ENCODE measurements at regions of chr18 and their contacts with region 1.

Region 1: DNA sequence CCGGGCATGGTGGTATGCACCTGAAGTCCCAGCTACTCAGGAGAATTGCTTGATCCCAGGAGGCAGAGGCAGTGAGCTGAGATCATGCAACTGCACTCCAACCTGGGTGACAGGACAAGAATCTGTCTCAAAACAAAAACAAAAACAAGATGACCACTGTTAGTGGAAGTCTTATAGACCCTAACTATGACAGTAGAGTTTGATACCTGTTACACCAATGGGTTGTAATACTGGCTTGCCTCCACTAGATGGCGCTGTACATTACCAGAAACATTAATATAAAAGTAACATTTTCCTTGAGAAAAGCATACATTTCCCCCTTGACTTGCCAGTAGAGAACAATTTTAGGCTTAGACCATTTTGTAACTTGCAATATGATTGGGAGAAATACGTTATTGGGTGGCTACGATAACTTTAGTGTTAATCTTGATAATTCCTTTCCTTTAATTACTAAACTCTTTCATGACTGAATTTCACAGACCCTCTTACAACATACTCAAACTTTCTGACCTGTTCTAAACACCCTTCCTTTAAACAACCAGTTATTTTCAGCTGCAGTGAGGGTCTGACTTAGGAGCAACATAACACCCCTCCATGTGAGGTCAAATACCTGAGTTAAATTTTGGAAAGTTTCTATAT is 19.5 kb downstream of the SLC25A52 start:
- DNase-seq: peak in 8 of 9 experiments; percentile 32 to 70 (median 56)
- ATAC-seq: peak; percentile 51
- H3K4me3 ChIP-seq: no peak overlapping the region
- H3K4me3 Mint-ChIP-seq: no peak overlapping the region
- H3K27ac ChIP-seq: no peak overlapping the region
- H3K27ac Mint-ChIP-seq: no peak overlapping the region
- H3K4me1 ChIP-seq: no peaks in the 10 kb centered on the region
- H3K4me1 Mint-ChIP-seq: no peaks in the 10 kb centered on the region
- H3K27me3 ChIP-seq: no peaks in the 10 kb centered on the region
- H3K27me3 Mint-ChIP-seq: no peaks in the 10 kb centered on the region
- CTCF ChIP-seq: peak; percentile 98

Region 2: GRCh38 chr18:31722369-31722957 is 18.8 kb before region 1 on chr18:
- CTCF ChIA-PET with region 1: interaction called, 10 read pairs
- POLR2A ChIA-PET with region 1: no interaction called
- intact Hi-C with region 1: loop called in 1 of 2 experiments (anchors 1 kb)
- DNase-seq: peak; percentile 40 to 78 (median 61)
- ATAC-seq: peak; percentile 64
- H3K4me3 ChIP-seq: no peak overlapping the region
- H3K4me3 Mint-ChIP-seq: no peak overlapping the region
- H3K27ac ChIP-seq: no peak overlapping the region
- H3K27ac Mint-ChIP-seq: no peak overlapping the region
- H3K4me1 ChIP-seq: no peaks in the 10 kb centered on the region
- H3K4me1 Mint-ChIP-seq: peaks cover 6% of the 10 kb centered on the region
- H3K27me3 ChIP-seq: peaks cover 0 to 3% of the 10 kb centered on the region in 2 experiments
- H3K27me3 Mint-ChIP-seq: peaks cover 33% of the 10 kb centered on the region
- CTCF ChIP-seq: peak; percentile 82

Region 3: DNA sequence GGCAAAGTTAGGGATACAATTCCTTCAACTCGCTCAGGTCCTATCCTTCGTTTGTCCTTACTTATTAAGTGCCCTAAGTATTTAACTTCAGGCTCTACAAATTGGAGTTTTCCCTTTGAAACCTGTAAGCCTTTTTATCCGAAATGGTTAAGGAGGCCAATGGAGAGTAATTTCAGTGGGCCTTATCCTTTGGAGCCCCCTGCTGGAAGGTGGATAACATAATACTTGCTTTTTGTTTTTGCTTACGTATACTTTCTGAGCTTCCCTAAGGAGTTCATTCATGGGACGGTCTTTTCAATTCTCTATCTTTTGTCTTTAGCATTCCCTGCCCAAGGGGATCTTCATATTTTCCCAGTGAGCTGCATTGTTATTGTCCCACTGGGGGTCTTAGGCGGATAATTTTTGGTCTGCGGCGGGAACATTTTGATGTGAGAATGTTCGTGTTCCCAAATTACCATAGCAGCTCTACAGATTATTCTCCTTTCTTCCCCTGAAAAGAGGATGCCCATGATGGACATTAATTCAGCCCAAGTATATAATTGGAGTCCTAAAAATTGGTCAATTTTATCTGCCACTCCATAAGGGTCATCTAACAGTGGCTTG is 236.2 kb after region 1 on chr18:
- CTCF ChIA-PET with region 1: interaction called, 6 read pairs
- POLR2A ChIA-PET with region 1: no interaction called
- intact Hi-C with region 1: loop called (anchors 1 to 5 kb)
- DNase-seq: peak in 5 of 9 experiments; percentile 15 to 65 (median 41)
- ATAC-seq: no peak
- H3K4me3 ChIP-seq: no peak overlapping the region
- H3K4me3 Mint-ChIP-seq: no peak overlapping the region
- H3K27ac ChIP-seq: no peak overlapping the region
- H3K27ac Mint-ChIP-seq: no peak overlapping the region
- H3K4me1 ChIP-seq: no peaks in the 10 kb centered on the region
- H3K4me1 Mint-ChIP-seq: peaks cover 1% of the 10 kb centered on the region
- H3K27me3 ChIP-seq: no peaks in the 10 kb centered on the region
- H3K27me3 Mint-ChIP-seq: no peaks in the 10 kb centered on the region
- CTCF ChIP-seq: peak; percentile 62

Region 4: GRCh38 chr18:32072321-32072720 is 331.1 kb after region 1 on chr18:
- CTCF ChIA-PET with region 1: no interaction called
- POLR2A ChIA-PET with region 1: no interaction called
- intact Hi-C with region 1: loop called in 1 of 2 experiments (anchors 2 kb)
- DNase-seq: peak in 2 of 9 experiments; percentile 50 to 65
- ATAC-seq: peak; percentile 48
- H3K4me3 ChIP-seq: no peak overlapping the region
- H3K4me3 Mint-ChIP-seq: no peak overlapping the region
- H3K27ac ChIP-seq: no peak overlapping the region
- H3K27ac Mint-ChIP-seq: no peak overlapping the region
- H3K4me1 ChIP-seq: no peaks in the 10 kb centered on the region
- H3K4me1 Mint-ChIP-seq: peaks cover 17% of the 10 kb centered on the region
- H3K27me3 ChIP-seq: no peaks in the 10 kb centered on the region
- H3K27me3 Mint-ChIP-seq: no peaks in the 10 kb centered on the region
- CTCF ChIP-seq: peak; percentile 65

Measured in CD8-positive, alpha-beta T cell (primary cell).